Aorta (tissue), 5 donors: ENCODE measurements at regions of chr21 and their contacts with region 1.

Region 1: DNA sequence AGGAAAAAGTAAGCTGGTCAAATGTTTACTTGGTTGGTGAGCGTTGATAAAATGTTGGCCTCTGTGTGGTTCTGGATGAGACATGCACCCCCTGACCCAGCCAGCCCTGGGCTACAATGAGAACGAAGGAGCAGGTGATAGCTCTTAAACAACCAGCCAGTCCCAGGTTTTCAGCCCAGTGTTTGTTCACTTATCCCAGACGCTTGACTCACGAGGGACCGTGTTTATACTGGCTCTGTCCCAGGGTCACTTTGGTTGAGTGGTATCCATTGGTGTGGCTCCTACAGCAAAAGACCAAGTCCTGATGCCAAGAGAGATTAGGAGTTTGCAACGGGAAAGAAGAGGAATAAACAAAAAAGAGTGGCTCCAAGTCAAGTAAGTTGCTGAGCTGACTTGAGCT is 86.9 kb downstream of the KCNJ15 start:
- DNase-seq: peak; percentile 87 to 89
- ATAC-seq: peak; percentile 84
- H3K4me3 ChIP-seq: no peak overlapping the region
- H3K27ac ChIP-seq: peak overlapping the region; percentile 94 to 95
- H3K4me1 ChIP-seq: peaks cover 0 to 8% of the 10 kb centered on the region in 2 donors
- H3K27me3 ChIP-seq: no peaks in the 10 kb centered on the region

Region 2: DNA sequence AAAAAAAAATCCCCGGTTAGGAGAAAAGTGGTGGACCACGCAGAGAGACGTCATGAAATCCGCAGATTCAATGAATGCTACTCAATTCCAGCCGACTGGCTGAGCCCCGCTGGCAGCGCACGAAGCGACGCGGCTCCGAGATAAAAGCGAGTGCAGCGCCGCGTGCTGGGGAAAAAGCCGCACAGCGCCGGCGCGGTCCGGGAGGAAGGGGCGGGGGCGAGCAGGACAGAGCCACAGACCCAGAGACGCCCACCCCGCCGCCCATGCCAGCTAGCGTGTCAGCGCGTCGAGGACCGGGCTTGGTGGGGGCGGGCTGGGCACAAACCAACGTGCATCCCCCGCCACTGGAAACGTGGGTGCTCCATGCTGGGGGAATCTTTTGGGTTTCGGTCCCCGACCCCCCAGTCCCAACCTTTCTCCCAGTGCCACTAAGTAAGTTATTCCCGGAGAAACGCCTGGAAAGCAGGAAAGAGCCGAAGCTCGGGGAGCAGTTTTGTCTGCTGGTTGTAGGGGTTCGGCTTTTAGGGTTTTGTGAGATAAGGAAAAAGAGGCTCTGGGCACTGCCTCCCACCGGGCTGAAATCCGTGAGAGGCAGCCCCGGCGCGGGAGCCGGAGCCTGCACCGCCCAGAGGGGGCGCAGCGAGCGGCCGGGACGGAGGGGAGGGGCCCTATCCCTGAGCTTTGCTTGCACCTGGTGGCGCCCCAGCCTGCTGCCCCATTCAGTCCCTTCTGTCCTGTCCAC is 427.2 kb before region 1 on chr21 and contains the start of gene KCNJ6:
- intact Hi-C with region 1: no loop called
- DNase-seq: peak in 1 of 2 donors; percentile 56
- ATAC-seq: peak; percentile 48
- H3K4me3 ChIP-seq: peak within 1 kb of the TSS in 1 of 2 donors; percentile 11
- H3K27ac ChIP-seq: no peak within 1 kb of the TSS
- H3K4me1 ChIP-seq: no peaks in the 10 kb centered on the region
- H3K27me3 ChIP-seq: peaks cover 0 to 2% of the 10 kb centered on the region in 2 donors
- total RNA-seq, gene KCNJ6: 0.16 TPM in 1 of 2 donors, not detected in the other

Region 3: GRCh38 chr21:38219049-38219628 is 124.6 kb before region 1 on chr21:
- intact Hi-C with region 1: loop called in 1 of 2 experiments (anchors 2 kb)
- DNase-seq: peak; percentile 81 to 83
- ATAC-seq: peak; percentile 89
- H3K4me3 ChIP-seq: no peak overlapping the region
- H3K27ac ChIP-seq: peak overlapping the region; percentile 51 to 71
- H3K4me1 ChIP-seq: peaks cover 0 to 2% of the 10 kb centered on the region in 2 donors
- H3K27me3 ChIP-seq: no peaks in the 10 kb centered on the region

Region 4: GRCh38 chr21:38244885-38245545 is 98.7 kb before region 1 on chr21:
- intact Hi-C with region 1: loop called in 1 of 2 experiments (anchors 5 kb)
- DNase-seq: no peak
- ATAC-seq: no peak
- H3K4me3 ChIP-seq: no peak overlapping the region
- H3K27ac ChIP-seq: no peak overlapping the region
- H3K4me1 ChIP-seq: peaks cover 0 to 3% of the 10 kb centered on the region in 2 donors
- H3K27me3 ChIP-seq: no peaks in the 10 kb centered on the region

Region 5: DNA sequence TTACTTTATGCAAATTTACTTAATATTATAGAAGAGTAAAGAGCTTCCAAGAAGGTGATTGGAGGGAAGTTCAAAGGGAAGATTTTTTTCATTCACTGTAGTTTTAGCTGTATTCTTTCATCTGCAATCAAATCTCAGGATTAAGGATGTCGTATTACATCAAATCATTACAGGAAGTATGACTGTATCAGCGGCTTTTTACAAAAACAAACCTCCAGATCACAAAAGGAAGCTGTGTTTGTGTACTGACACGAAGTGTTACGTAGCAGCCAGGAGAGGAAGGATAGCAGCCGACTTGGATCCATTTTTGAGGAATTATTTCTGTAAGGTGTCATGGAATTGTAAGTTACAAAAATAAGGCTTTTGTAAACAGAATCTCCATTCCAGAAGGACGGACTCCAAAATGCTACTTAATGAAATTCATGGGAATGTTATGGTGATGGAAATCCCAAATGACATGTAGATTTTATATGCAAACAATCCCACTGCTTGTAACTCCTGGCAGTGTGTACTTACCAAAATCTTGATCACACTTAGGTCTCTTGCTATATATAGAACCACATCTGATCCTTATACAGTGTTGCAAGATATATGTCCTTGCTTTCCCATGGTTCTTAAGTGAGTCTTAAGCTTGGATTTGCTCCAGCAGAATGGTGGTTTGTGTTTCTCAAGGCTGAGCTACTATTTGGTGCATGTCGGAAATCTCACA is 37.1 kb before region 1 on chr21:
- intact Hi-C with region 1: loop called (anchors 5 kb)
- DNase-seq: no peak
- ATAC-seq: no peak
- H3K4me3 ChIP-seq: no peak overlapping the region
- H3K27ac ChIP-seq: no peak overlapping the region
- H3K4me1 ChIP-seq: peaks cover 2 to 5% of the 10 kb centered on the region in 2 donors
- H3K27me3 ChIP-seq: no peaks in the 10 kb centered on the region

Region 6: DNA sequence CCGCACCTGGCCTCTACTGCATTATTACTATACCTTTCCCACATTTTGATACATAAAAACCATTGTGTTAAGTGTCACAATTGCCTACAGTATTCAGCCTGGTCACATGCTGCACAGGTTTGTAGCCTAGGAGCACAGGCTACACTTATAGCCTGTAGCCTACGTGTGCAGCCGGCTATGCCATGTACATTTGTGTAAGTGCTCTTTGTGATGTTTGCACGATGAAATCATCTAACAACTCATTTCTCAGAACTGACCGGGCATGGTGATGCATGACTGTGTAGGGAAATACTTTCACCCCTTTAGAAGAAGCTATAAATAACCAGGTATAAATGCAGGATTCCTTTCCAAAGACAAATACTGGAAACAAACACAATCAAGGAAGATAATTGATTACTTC is 142.5 kb after region 1 on chr21:
- intact Hi-C with region 1: loop called in 1 of 2 experiments (anchors 5 kb)
- DNase-seq: peak in 1 of 2 donors; percentile 59
- ATAC-seq: peak; percentile 65
- H3K4me3 ChIP-seq: no peak overlapping the region
- H3K27ac ChIP-seq: peak overlapping the region in 1 of 2 donors; percentile 32
- H3K4me1 ChIP-seq: peaks cover 5 to 21% of the 10 kb centered on the region in 2 donors
- H3K27me3 ChIP-seq: no peaks in the 10 kb centered on the region